Activated T-helper 2 cell treated with anti-CD3 and anti-CD28 coated beads, Interferon-gamma antibody, Interleukin-2, Interleukin-4, amounts not matched to agents 10 μg/mL and 5 μg/mL and 100 μg/mL, durations not matched to agents 14 hours and 24 hours and 36 hours (primary cell): ENCODE measurements at regions of chr20 and their contacts with region 1.

Region 1: GRCh38 chr20:33666293-33667244 is at the start of gene ACTL10:
- DNase-seq: peak; percentile 79
- H3K4me3 Mint-ChIP-seq: peak within 1 kb of the TSS; percentile 85
- H3K27ac Mint-ChIP-seq: peak within 1 kb of the TSS; percentile 85
- H3K4me1 Mint-ChIP-seq: peaks cover 24% of the 10 kb centered on the region
- H3K27me3 Mint-ChIP-seq: no peaks in the 10 kb centered on the region
- total RNA-seq, gene ACTL10: 2.6 and 3.3 TPM in 2 replicates

Region 2: DNA sequence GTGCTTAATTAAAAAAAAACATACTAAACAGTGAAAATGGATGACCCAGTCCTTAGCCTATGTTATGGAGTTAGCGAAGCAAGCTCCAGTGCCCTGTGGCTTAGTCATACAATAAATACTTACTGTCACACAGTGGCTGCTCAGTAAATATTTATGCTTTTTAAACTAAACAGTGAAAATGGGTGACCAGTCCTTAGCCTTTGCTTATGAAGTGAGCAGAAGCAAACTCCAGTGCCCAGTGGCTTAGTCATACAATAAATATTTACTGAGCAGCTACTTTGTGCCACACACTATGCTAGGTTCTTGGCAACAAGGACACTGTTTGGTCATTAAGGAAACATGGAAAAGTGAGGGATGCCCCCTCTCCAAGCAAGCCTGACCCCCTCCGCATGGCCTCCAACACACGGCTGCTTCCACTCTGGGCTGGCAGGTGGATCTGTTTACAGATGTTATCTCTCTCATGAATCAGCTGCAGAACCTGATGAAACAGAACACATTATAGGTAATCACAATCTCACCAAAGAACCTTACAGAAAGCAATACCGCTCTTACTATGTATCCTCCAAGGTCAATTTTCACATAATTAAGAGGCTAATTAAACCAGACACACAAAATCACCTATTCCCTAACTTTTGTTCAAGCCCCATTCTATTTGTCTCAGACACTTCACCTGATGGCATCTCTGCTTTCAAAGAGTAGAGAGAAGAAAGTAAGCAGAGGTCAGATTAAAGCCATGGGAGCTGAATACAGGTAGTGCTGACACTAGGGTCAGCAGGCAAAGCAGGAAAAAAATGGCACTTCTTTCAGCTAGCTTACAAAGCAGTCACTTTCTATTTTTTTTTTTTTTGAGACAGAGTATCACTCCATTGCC is 292.6 kb before region 1 on chr20:
- intact Hi-C with region 1: no loop called
- DNase-seq: no peak
- H3K4me3 Mint-ChIP-seq: no peak overlapping the region
- H3K27ac Mint-ChIP-seq: no peak overlapping the region
- H3K4me1 Mint-ChIP-seq: peaks cover 37% of the 10 kb centered on the region
- H3K27me3 Mint-ChIP-seq: no peaks in the 10 kb centered on the region

Region 3: GRCh38 chr20:33401184-33401920 is 265.2 kb before region 1 on chr20 and contains the start of gene CDK5RAP1:
- intact Hi-C with region 1: loop called (anchors 5 kb)
- DNase-seq: peak; percentile 82
- H3K4me3 Mint-ChIP-seq: peak within 1 kb of the TSS; percentile 98
- H3K27ac Mint-ChIP-seq: peak within 1 kb of the TSS; percentile 96
- H3K4me1 Mint-ChIP-seq: peaks cover 30% of the 10 kb centered on the region
- H3K27me3 Mint-ChIP-seq: no peaks in the 10 kb centered on the region
- total RNA-seq, gene CDK5RAP1: 40.3 and 40.7 TPM in 2 replicates

Region 4: DNA sequence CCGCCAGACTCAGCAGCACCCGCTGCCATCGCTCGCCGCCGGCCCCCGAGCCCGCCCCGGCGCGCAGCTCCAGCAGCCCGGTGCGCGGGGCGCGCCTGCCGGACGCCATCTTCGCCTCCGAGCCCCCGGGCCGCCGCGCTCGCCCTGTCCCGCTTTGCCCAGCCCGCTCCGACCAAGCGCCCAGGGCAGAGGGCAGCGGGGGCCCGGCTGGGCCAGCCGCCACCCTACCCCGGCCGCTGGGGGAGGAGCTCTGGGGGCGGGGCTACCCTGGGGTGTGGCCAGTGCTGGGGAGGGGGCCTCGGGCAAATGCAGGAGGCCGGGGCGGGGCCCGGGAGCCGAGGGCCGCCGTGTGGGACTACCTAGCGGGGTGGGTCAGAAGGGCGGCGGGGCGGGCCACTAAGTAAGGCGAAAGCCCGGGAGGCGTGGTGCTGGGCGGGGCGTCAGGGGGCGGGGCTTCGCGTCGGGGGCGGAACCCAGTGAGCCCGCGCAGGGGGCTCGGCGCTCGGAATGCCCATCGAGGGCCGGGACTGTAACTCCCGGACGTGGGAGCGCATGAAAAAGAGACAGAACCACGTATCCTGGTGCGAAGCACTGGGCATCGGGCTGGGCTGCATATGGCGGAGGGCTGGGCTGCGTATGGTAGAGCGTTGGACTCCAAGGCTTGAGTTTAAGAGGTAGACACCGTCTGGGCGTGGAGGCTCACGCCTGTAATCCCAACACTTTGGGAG is 222.9 kb before region 1 on chr20 and contains the start of gene SNTA1:
- intact Hi-C with region 1: loop called (anchors 5 kb)
- DNase-seq: peak; percentile 83
- H3K4me3 Mint-ChIP-seq: peak within 1 kb of the TSS; percentile 88
- H3K27ac Mint-ChIP-seq: peak within 1 kb of the TSS; percentile 78
- H3K4me1 Mint-ChIP-seq: peaks cover 14% of the 10 kb centered on the region
- H3K27me3 Mint-ChIP-seq: peaks cover 13% of the 10 kb centered on the region
- total RNA-seq, gene SNTA1: 1.1 and 1.6 TPM in 2 replicates

Region 5: GRCh38 chr20:33450867-33451266 is 215.7 kb before region 1 on chr20:
- intact Hi-C with region 1: loop called (anchors 2 kb)
- DNase-seq: no peak
- H3K4me3 Mint-ChIP-seq: no peak overlapping the region
- H3K27ac Mint-ChIP-seq: no peak overlapping the region
- H3K4me1 Mint-ChIP-seq: no peaks in the 10 kb centered on the region
- H3K27me3 Mint-ChIP-seq: no peaks in the 10 kb centered on the region

Region 6: DNA sequence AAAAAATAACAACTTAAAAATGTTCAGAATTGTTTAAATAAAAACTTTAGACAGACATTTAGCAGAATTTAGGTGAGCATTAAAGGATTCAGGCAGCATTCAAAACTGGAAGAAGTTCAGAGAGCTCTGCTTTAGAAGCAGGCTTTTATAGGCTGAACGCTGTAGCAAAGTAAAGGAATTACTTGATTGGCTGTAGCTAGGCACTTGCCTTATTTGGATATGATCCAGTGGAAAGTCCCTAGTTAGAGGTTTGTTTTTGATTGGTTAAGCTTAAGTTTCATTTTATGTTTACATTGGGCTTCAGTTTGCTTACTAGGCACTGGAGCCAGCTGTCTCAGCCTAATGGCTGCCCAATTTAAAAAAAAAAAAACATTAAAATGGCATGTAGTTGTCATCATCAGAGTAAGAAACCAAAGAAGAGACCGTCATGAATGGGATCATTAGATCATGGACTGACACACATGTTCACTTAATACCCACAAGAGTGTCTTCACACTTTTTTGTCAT is 111.6 kb before region 1 on chr20:
- intact Hi-C with region 1: loop called (anchors 10 kb)
- DNase-seq: peak; percentile 35
- H3K4me3 Mint-ChIP-seq: peak overlapping the region; percentile 56
- H3K27ac Mint-ChIP-seq: peak overlapping the region; percentile 77
- H3K4me1 Mint-ChIP-seq: peaks cover 25% of the 10 kb centered on the region
- H3K27me3 Mint-ChIP-seq: no peaks in the 10 kb centered on the region